ENCODE measurements at regions of chr1 and their contacts with region 1.

Region 1: DNA sequence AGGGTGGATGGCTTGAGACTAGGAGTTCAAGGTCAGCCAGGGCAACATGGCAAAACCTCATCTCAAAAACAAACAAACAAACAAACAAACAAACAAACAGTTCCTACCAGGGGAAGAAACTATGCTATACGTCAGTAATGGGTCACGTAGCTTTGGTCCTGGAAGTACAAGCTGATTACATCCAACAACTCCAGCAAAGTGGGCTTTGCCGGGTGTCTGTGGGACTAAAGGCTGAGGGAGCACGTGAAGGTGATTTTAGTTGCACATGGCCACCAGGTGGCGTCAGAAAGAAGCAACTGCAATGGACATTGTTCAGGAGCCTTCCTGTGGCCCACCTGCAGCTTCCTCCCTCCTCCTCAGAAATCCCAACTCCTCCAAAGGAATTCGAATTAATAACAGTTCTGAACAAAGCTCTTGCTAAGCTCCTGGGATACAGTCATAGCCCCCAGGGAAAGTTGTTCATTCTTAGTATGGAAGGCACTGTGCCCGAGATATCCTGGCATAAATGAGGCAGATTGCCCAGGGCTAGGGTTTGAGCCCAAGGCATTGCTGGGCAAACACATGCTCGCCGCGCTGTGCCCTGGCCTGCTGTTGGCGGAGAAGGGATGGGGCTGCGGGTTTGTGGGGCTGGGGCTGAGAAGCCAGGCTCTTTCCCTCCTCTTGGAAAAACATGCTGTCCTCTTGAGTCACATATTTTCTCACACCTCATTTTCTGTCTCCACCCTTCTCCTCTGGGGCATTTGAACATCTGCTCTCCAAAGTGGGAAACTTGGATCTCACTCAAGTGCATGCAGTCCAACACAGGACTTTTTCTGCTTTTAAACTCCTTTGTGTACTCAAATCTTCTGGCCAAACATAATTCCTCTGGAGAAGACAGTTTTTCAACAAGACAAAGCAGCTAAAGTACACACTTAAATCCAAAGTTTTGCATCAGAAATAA is 28.6 kb downstream of the AKNAD1 start:
- DNase-seq: peak; percentile 81
- ATAC-seq: peak; percentile 84
- H3K4me3 Mint-ChIP-seq: no peak overlapping the region
- H3K27ac Mint-ChIP-seq: no peak overlapping the region
- H3K4me1 Mint-ChIP-seq: peaks cover 9% of the 10 kb centered on the region
- H3K27me3 Mint-ChIP-seq: no peaks in the 10 kb centered on the region

Region 2: GRCh38 chr1:108767707-108768106 is 60.6 kb before region 1 on chr1:
- CTCF ChIA-PET with region 1: no interaction called
- DNase-seq: no peak
- ATAC-seq: no peak
- H3K4me3 Mint-ChIP-seq: no peak overlapping the region
- H3K27ac Mint-ChIP-seq: no peak overlapping the region
- H3K4me1 Mint-ChIP-seq: no peaks in the 10 kb centered on the region
- H3K27me3 Mint-ChIP-seq: no peaks in the 10 kb centered on the region

Region 3: DNA sequence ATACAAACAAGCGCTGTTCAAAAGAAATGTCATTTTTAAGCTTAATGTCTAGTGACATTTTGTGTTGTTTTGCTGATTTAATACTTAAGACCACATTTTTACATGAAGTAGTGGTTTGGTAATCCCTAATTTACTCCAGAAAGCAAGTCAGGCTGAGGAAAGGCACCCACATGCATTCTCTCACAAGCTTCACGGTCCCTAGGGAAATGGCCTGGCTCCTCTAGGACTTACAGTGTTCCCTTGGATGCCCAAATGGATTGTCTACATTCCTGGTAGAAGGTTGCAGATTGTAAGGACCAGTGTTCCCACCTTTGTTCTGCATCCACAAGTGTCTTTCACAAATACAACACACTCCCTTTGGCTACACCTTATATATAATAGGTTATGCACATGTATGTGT is 58.0 kb after region 1 on chr1:
- CTCF ChIA-PET with region 1: interaction called, 12 read pairs
- DNase-seq: no peak
- ATAC-seq: no peak
- H3K4me3 Mint-ChIP-seq: no peak overlapping the region
- H3K27ac Mint-ChIP-seq: no peak overlapping the region
- H3K4me1 Mint-ChIP-seq: peaks cover 1% of the 10 kb centered on the region
- H3K27me3 Mint-ChIP-seq: no peaks in the 10 kb centered on the region

Region 4: GRCh38 chr1:108897865-108898720 is 69.8 kb after region 1 on chr1:
- CTCF ChIA-PET with region 1: interaction called, 160 read pairs
- DNase-seq: peak; percentile 52
- ATAC-seq: peak; percentile 70
- H3K4me3 Mint-ChIP-seq: no peak overlapping the region
- H3K27ac Mint-ChIP-seq: no peak overlapping the region
- H3K4me1 Mint-ChIP-seq: no peaks in the 10 kb centered on the region
- H3K27me3 Mint-ChIP-seq: no peaks in the 10 kb centered on the region

Region 5: GRCh38 chr1:108933944-108934343 is 105.7 kb after region 1 on chr1:
- CTCF ChIA-PET with region 1: no interaction called
- DNase-seq: no peak
- ATAC-seq: no peak
- H3K4me3 Mint-ChIP-seq: no peak overlapping the region
- H3K27ac Mint-ChIP-seq: no peak overlapping the region
- H3K4me1 Mint-ChIP-seq: no peaks in the 10 kb centered on the region
- H3K27me3 Mint-ChIP-seq: no peaks in the 10 kb centered on the region

Region 6: DNA sequence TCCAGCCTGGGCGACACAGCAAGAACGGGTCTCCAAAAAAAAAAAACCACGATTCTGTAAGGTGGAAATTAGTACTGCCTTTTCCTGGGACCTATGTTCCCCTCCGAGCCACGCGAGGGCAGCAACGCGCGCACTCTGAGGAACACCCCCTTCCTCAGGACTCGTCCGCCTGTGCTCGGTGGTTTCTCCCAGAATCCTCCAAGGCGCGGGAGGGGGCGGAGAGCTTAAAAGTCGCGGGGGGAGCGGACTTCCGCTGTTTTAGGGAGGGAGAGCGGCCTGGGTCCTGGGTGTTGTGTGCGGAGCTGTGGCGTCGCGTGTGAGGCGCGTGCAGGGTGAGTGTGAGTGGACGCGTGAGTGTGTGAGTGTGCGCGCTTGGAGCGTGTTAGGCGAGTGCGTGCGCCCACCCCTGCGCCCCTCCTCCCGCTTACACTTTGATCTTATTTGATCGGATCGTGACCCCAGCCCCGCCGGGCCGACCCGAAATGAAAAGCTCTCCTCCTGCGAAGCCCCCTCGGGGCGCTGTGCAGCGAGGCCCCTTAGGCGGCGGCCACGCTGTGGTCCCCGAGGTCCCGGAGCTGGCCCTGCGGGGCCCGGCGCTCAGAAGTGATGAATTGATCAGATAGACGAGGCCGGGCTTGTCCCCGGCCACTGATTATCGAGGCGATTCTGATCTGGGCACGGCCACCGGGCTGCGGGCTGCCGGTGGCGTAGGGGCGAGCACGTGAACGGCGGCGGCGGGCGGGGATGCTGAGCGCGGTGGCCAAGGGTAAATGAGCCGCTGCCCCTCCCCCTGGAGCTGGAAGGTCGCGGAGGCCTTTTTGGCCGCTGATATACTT is 271.9 kb after region 1 on chr1:
- CTCF ChIA-PET with region 1: interaction called, 11 read pairs
- DNase-seq: peak; percentile 98
- ATAC-seq: peak; percentile 94
- H3K4me3 Mint-ChIP-seq: peak overlapping the region; percentile 96
- H3K27ac Mint-ChIP-seq: peak overlapping the region; percentile 93
- H3K4me1 Mint-ChIP-seq: peaks cover 14% of the 10 kb centered on the region
- H3K27me3 Mint-ChIP-seq: no peaks in the 10 kb centered on the region